Adrenal gland (tissue), 19 donors: ENCODE measurements at regions of chr9 and their contacts with region 1.

Region 1: DNA sequence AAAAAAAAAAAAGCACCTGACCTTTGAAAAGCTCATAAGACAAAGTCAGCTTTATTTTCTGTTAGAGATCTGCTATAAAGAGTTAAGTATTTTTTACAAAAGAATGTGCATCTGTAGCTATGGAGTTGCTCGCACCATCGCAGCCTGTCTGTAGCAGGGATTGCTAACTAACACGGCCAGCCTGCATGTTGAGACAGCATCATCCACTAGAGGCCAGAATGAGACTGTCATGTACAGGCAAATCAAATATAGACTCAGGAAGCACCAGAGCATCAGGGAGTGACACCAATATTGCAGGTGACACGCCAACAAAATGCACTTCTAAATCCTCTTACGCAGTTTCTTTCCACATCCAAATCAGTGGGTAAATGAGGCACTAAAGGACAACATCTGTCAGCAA is 136.3 kb upstream of the RASEF start:
- DNase-seq: peak; percentile 53 to 89 (median 72)
- H3K4me3 ChIP-seq: no peak overlapping the region
- H3K27ac ChIP-seq: no peak overlapping the region
- H3K4me1 ChIP-seq: no peaks in the 10 kb centered on the region
- H3K27me3 ChIP-seq: peaks cover 7% of the 10 kb centered on the region
- CTCF ChIP-seq: peak; percentile 46 to 88 (median 72)
- POLR2A ChIP-seq: no peak

Region 2: GRCh38 chr9:82949203-82949602 is 250.0 kb before region 1 on chr9:
- intact Hi-C with region 1: no loop called
- DNase-seq: no peak
- H3K4me3 ChIP-seq: no peak overlapping the region
- H3K27ac ChIP-seq: no peak overlapping the region
- H3K4me1 ChIP-seq: no peaks in the 10 kb centered on the region
- H3K27me3 ChIP-seq: no peaks in the 10 kb centered on the region
- CTCF ChIP-seq: no peak
- POLR2A ChIP-seq: no peak

Region 3: GRCh38 chr9:83119873-83120272 is 79.4 kb before region 1 on chr9:
- intact Hi-C with region 1: no loop called
- DNase-seq: no peak
- H3K4me3 ChIP-seq: no peak overlapping the region
- H3K27ac ChIP-seq: no peak overlapping the region
- H3K4me1 ChIP-seq: no peaks in the 10 kb centered on the region
- H3K27me3 ChIP-seq: no peaks in the 10 kb centered on the region
- CTCF ChIP-seq: no peak
- POLR2A ChIP-seq: no peak

Region 4: GRCh38 chr9:83327323-83327722 is 128.1 kb after region 1 on chr9:
- intact Hi-C with region 1: loop called in 1 of 2 experiments (anchors 10 kb)
- DNase-seq: peak in 3 of 7 donors; percentile 17 to 31 (median 19)
- H3K4me3 ChIP-seq: no peak overlapping the region
- H3K27ac ChIP-seq: peak overlapping the region in 3 of 5 donors; percentile 4 to 70 (median 40)
- H3K4me1 ChIP-seq: peaks cover 8 to 19% of the 10 kb centered on the region in 2 donors
- H3K27me3 ChIP-seq: no peaks in the 10 kb centered on the region
- CTCF ChIP-seq: no peak
- POLR2A ChIP-seq: no peak

Region 5: GRCh38 chr9:83544002-83544698 is 344.9 kb after region 1 on chr9:
- intact Hi-C with region 1: loop called in 1 of 2 experiments (anchors 10 kb)
- DNase-seq: peak; percentile 51 to 88 (median 83)
- H3K4me3 ChIP-seq: no peak overlapping the region
- H3K27ac ChIP-seq: peak overlapping the region in 1 of 5 donors; percentile 5
- H3K4me1 ChIP-seq: peaks cover 0 to under 1% of the 10 kb centered on the region in 2 donors
- H3K27me3 ChIP-seq: no peaks in the 10 kb centered on the region
- CTCF ChIP-seq: peak; percentile 65 to 88 (median 82)
- POLR2A ChIP-seq: no peak

Region 6: GRCh38 chr9:83601463-83601862 is 402.2 kb after region 1 on chr9:
- intact Hi-C with region 1: loop called in 1 of 2 experiments (anchors 10 kb)
- DNase-seq: no peak
- H3K4me3 ChIP-seq: no peak overlapping the region
- H3K27ac ChIP-seq: no peak overlapping the region
- H3K4me1 ChIP-seq: no peaks in the 10 kb centered on the region
- H3K27me3 ChIP-seq: no peaks in the 10 kb centered on the region
- CTCF ChIP-seq: no peak
- POLR2A ChIP-seq: no peak